Heart left ventricle (tissue), 16 donors: ENCODE measurements at regions of chr12 and their contacts with region 1.

Region 1: GRCh38 chr12:77919450-77919849 is 88.8 kb downstream of the NAV3 start:
- DNase-seq: no peak
- ATAC-seq: no peak
- H3K4me3 ChIP-seq: no peak overlapping the region
- H3K27ac ChIP-seq: no peak overlapping the region
- H3K4me1 ChIP-seq: peaks cover 0 to 4% (median 0%) of the 10 kb centered on the region in 12 donors
- H3K27me3 ChIP-seq: no peaks in the 10 kb centered on the region
- CTCF ChIP-seq: no peak
- POLR2A ChIP-seq: no peak

Region 2: DNA sequence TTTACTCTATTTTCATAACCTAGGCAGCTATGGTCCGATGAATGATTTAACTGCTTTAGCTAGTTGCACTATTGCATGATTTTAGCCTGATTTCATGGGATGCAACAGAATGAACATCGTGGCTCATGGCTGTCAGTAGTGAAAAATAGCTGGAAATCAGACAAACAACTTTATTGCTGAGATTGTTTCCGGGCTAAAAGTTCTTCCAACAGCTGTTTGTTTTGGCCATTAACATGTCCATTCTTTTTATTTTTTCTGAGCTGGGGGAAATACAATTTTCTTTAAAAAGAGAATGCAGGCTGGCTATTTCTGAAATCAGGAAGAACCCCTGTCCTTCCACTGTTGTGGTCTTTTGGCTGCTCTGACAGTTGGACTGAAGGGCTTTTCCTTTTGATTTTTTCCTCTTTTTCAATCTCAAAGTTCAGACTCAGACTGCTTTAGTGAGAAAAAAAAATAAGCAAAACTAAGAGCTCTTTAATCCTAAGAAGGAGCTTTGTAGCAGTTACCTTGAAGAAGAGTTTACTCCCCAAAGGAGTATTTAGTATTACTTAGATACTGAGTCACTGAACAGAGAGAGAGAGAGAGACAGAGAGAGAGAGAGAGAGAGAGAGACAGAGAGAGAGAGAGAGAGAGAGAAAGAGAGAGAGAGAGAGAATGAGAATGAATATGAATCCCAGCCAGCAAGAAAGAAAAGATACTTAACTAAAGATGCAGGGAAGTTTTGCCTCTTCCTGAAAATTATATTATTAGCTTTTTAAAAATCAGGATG is 88.7 kb before region 1 on chr12 and contains the start of gene NAV3:
- intact Hi-C with region 1: loop called in 1 of 10 experiments (anchors 5 kb)
- DNase-seq: no peak
- ATAC-seq: peak in 2 of 4 donors; percentile 43 to 63
- H3K4me3 ChIP-seq: peak within 1 kb of the TSS in 8 of 12 donors; percentile 9 to 49 (median 32)
- H3K27ac ChIP-seq: peak within 1 kb of the TSS in 11 of 12 donors; percentile 12 to 67 (median 52)
- H3K4me1 ChIP-seq: peaks cover 0 to 34% (median 1%) of the 10 kb centered on the region in 12 donors
- H3K27me3 ChIP-seq: no peaks in the 10 kb centered on the region
- CTCF ChIP-seq: no peak
- POLR2A ChIP-seq: no peak
- total RNA-seq, gene NAV3: 1.8 to 18.0 (median 6.2) TPM